Breast epithelium (tissue), 4 donors: ENCODE measurements at regions of chr13 and their contacts with region 1.

Region 1: GRCh38 chr13:76225815-76226489 is 589.8 kb downstream of the LMO7 start:
- DNase-seq: no peak
- H3K4me3 ChIP-seq: no peak overlapping the region
- H3K27ac ChIP-seq: no peak overlapping the region
- H3K4me1 ChIP-seq: no peaks in the 10 kb centered on the region
- H3K27me3 ChIP-seq: no peaks in the 10 kb centered on the region
- CTCF ChIP-seq: no peak
- POLR2A ChIP-seq: no peak

Region 2: DNA sequence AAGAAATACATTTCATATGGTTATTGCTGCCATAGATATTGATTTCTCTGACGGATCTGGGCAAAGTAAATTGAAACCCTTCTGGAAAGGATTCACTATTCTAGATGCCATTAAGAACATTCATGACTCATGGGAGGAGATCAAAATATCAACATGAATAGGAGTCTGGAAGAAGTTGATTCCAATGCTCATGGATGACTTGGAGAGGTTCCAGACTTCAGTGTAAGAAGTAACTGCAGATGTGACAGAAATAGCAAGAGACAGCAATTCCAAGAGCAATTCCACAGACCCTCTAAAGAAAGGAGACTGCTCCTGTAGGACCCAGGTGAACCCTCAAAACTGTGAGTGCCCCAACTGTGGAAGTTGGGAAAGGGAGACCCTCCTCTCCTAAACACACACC is 691.1 kb after region 1 on chr13:
- intact Hi-C with region 1: loop called (anchors 5 kb)
- DNase-seq: no peak
- H3K4me3 ChIP-seq: no peak overlapping the region
- H3K27ac ChIP-seq: no peak overlapping the region
- H3K4me1 ChIP-seq: no peaks in the 10 kb centered on the region
- H3K27me3 ChIP-seq: no peaks in the 10 kb centered on the region
- CTCF ChIP-seq: no peak
- POLR2A ChIP-seq: no peak